Activated naive CD4-positive, alpha-beta T cell treated with anti-CD3 and anti-CD28 coated beads for 36 hours (primary cell): ENCODE measurements at regions of chr1 and their contacts with region 1.

Region 1: GRCh38 chr1:3483801-3484444 is 29.5 kb downstream of the ARHGEF16 start:
- DNase-seq: peak; percentile 50
- H3K4me3 Mint-ChIP-seq: no peak overlapping the region
- H3K27ac Mint-ChIP-seq: no peak overlapping the region
- H3K4me1 Mint-ChIP-seq: peaks cover 2% of the 10 kb centered on the region
- H3K27me3 Mint-ChIP-seq: no peaks in the 10 kb centered on the region

Region 2: DNA sequence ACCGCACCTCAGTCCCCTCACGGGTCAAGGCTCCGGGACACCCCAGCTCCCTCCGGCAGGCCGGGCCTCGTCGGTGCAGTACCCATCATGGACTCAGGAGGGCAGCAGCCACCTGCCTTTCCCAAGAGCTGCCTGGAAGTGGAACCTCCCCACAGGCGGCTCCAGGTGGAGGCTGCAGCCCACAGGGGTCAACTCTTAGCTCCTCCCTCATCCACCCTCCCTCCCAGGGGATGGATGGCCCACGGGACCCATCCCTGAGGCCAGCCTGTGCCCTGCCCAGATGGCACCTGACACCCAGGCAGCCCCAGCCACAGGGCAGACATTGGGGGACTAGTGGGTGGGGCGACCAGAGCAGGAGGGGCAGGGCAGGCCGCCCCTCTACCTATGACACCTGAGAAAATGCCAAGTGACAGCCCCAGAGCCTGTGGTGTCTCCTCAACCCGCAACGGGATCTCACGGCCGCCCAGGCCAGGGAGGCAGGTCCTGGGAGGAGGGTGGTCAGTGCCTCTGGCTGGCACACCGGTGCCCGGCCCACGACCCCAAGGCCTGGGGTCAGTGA is 30.6 kb before region 1 on chr1:
- CTCF ChIA-PET with region 1: interaction called, 27 read pairs
- intact Hi-C with region 1: loop called (anchors 1 kb)
- DNase-seq: peak; percentile 84
- H3K4me3 Mint-ChIP-seq: peak overlapping the region; percentile 32
- H3K27ac Mint-ChIP-seq: no peak overlapping the region
- H3K4me1 Mint-ChIP-seq: peaks cover 2% of the 10 kb centered on the region
- H3K27me3 Mint-ChIP-seq: peaks cover 7% of the 10 kb centered on the region